Common myeloid progenitor, CD34-positive (primary cell): ENCODE measurements at regions of chr12 and their contacts with region 1.

Region 1: DNA sequence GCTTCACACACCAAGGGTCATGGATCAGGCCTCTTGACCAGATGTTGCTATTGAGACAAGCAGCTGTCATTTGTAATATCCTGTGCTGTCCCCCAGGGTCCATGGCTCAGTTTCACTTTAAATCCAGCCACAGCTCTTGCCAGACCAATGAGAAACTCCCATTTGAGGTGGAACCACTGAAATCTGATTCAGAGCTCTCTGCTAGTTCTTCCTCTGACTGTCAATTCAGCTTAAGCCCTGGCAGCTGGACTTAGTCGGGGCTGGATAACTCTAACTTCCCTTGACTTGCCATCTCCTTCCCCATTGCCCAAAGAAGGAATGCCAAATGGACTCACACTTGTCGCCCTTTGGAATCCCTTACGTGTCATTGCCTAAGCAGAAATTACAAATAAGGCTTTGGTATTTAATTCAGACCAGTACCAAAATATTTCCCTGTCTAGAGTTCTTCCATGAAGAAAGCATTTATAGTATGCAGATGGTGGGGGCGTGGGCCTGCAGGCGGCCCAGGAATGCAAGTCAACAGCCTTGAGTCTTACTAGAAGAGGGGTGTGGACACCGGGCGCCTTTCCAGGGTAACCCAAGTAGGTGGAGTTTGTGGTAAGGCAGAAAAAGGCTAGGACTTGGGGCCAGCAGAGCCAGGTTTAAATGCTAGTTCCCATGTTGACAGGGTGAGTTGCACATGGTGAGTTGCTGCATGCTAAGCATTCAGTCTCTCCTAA is 96.9 kb upstream of the TMPO start:
- DNase-seq: peak in 2 of 3 donors; percentile 34 to 50
- H3K4me3 ChIP-seq: no peak overlapping the region
- H3K27ac ChIP-seq: no peak overlapping the region
- H3K4me1 ChIP-seq: peaks cover 0 to 8% (median 6%) of the 10 kb centered on the region in 4 experiments
- H3K27me3 ChIP-seq: no peaks in the 10 kb centered on the region

Region 2: DNA sequence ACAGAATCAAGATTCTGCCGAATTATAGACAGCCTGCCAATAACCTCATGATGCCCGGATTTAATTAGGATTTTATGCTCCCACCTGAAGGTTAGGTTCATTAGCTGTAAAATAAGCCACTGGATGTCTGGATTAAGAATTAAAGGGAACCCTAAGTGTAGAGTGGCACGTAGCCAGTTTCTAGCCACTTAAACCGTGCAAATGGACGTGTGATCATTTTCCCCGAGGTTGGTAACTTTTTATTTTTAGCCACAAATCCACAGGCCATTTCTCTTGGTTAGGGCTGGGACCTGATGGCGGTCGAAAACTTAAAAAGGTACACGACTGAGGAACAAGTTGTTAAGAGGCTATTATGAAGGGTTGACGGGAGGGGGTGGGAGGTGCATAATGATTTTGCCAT is 30.4 kb before region 1 on chr12:
- CTCF ChIA-PET with region 1: no interaction called
- POLR2A ChIA-PET with region 1: no interaction called
- DNase-seq: no peak
- H3K4me3 ChIP-seq: no peak overlapping the region
- H3K27ac ChIP-seq: no peak overlapping the region
- H3K4me1 ChIP-seq: no peaks in the 10 kb centered on the region
- H3K27me3 ChIP-seq: peaks cover 0 to 1% (median 0%) of the 10 kb centered on the region in 5 experiments

Region 3: DNA sequence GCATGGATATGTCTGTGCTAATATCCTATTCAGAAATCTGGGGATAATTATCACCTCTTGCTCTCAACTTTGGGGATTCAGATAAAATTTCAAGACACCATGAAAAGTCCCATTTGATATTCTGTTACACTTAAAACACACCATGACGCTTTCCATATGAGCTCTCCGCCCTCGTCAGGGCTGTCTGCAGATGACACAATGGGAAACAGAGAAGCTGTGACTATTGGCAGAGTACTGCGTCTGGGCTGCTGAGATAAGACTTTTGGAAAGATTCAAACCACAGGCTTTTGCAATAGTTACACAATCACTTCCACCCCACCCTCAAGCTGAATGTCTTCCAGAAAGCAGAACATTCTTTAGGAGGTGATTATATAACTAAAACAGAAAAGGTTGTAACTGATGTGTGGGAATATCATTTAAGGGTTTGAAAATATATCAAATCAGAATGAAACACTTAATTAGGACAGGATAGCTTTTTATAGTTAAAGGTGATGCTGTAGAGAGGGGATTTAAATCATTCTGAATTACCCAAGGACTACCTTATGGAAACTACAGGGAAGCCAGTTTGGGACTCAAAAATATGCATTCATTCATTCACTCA is 21.6 kb after region 1 on chr12:
- CTCF ChIA-PET with region 1: interaction called, 89 read pairs
- POLR2A ChIA-PET with region 1: no interaction called
- DNase-seq: peak; percentile 98 to 99 (median 99)
- H3K4me3 ChIP-seq: peak overlapping the region in 5 of 7 experiments; percentile 8 to 48 (median 33)
- H3K27ac ChIP-seq: peak overlapping the region in 1 of 2 experiments; percentile 56
- H3K4me1 ChIP-seq: peaks cover 13 to 27% (median 22%) of the 10 kb centered on the region in 4 experiments
- H3K27me3 ChIP-seq: no peaks in the 10 kb centered on the region

Region 4: GRCh38 chr12:98470469-98471082 is 52.1 kb after region 1 on chr12:
- CTCF ChIA-PET with region 1: no interaction called
- POLR2A ChIA-PET with region 1: no interaction called
- DNase-seq: no peak
- H3K4me3 ChIP-seq: no peak overlapping the region
- H3K27ac ChIP-seq: no peak overlapping the region
- H3K4me1 ChIP-seq: no peaks in the 10 kb centered on the region
- H3K27me3 ChIP-seq: peaks cover 0 to 2% (median 0%) of the 10 kb centered on the region in 5 experiments

Region 5: DNA sequence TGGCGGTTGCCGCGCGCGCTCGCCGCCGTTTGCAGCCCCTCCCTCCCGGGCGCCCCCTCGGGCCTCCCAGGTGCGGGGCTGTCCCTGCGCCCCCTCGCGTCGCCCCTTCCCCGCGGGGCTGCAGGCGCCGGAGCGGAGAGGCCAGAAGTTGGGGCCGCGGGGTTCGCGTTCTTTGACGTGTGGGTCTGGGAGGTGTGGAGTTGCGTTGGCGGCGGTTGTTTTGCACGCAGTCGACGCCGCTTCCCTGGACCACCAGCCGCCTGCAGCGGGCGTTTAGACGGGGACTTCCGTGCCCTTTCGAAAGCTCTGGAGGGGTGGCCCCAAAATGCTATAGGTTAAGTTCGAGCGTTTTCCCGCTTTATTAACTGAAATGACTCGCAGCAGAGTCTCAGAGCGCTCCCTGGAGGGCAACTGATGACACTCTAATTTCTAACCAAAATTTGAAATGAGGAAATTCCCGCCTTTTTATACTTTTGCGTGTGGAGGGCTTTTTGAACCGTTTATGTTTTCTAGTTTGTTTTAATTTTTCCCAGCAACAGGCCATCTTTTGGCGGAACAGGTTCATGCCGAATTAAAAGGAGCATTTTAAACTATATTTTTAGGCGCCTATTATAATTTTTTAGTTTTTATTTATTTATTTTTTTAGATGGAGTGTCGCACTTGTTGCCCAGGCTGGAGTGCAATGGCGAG is 97.8 kb after region 1 on chr12:
- CTCF ChIA-PET with region 1: interaction called, 45 read pairs
- POLR2A ChIA-PET with region 1: interaction called, 3 read pairs
- DNase-seq: peak; percentile 90 to 96 (median 95)
- H3K4me3 ChIP-seq: peak overlapping the region; percentile 93 to 100 (median 98)
- H3K27ac ChIP-seq: peak overlapping the region; percentile 86 to 95
- H3K4me1 ChIP-seq: peaks cover 12 to 38% (median 22%) of the 10 kb centered on the region in 4 experiments
- H3K27me3 ChIP-seq: no peaks in the 10 kb centered on the region